ENCODE measurements at regions of chr19 and their contacts with region 1.

Region 1: DNA sequence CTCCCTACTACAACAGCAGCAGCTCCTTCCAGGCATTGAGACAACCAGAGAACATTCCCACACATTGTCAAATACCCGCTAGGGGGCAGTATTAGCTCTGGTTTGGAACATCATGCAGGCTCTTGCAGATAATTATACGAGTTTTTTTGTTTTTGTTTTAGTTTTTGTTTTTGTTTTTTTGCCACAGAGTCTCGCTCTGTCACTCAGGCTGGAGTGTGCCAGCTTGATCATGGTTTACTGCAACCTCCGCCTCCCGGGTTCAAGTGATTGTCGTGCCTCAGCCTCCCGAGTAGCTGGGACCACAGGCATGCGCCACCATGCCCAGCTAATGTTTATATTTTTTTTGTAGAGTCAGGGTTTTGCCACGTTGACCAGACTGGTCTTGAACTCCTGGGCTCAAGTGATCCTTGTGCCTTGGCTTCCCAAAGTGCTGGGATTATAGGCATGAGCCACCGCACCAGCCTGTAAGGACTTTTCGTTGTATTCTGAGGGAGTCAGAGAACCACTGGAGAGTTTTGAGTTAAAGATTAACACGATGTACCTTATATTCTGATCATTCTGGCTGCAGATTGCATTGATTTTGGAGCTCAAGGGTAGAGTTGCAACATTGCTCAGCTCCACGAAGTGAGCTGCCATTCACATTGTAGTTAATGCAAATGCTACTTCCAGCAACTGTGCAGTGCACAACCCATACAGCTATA is 41.7 kb upstream of the CEACAM20 start:
- DNase-seq: peak; percentile 76
- ATAC-seq: peak; percentile 96
- H3K4me3 ChIP-seq: no peak overlapping the region
- H3K27ac ChIP-seq: no peak overlapping the region
- H3K4me1 ChIP-seq: no peaks in the 10 kb centered on the region; a peak in 1 of 4 replicates
- H3K27me3 ChIP-seq: no peaks in the 10 kb centered on the region
- CTCF ChIP-seq: peak; percentile 77 to 82 (median 79)
- POLR2A ChIP-seq: no peak
- RAD21 ChIP-seq: peak; percentile 88

Region 2: GRCh38 chr19:44553478-44554171 is 17.5 kb before region 1 on chr19:
- CTCF ChIA-PET with region 1: interaction called, 10 read pairs
- POLR2A ChIA-PET with region 1: no interaction called
- RAD21 ChIA-PET with region 1: no interaction called
- intact Hi-C with region 1: no loop called
- DNase-seq: no peak
- ATAC-seq: no peak
- H3K4me3 ChIP-seq: no peak overlapping the region
- H3K27ac ChIP-seq: 0 out of 2 replicates have a peak overlapping the region, but pooled peaks have one; percentile 8
- H3K4me1 ChIP-seq: peaks cover 11 to 18% of the 10 kb centered on the region in 2 experiments
- H3K27me3 ChIP-seq: no peaks in the 10 kb centered on the region
- CTCF ChIP-seq: no peak
- POLR2A ChIP-seq: no peak
- RAD21 ChIP-seq: no peak

Region 3: GRCh38 chr19:44587963-44588770 is 17.0 kb after region 1 on chr19:
- CTCF ChIA-PET with region 1: interaction called, 20 read pairs
- POLR2A ChIA-PET with region 1: no interaction called
- RAD21 ChIA-PET with region 1: no interaction called
- intact Hi-C with region 1: no loop called
- DNase-seq: peak; percentile 78
- ATAC-seq: peak; percentile 89
- H3K4me3 ChIP-seq: peak overlapping the region; percentile 37 to 50
- H3K27ac ChIP-seq: peak overlapping the region; percentile 66
- H3K4me1 ChIP-seq: peaks cover 18 to 51% of the 10 kb centered on the region in 2 experiments
- H3K27me3 ChIP-seq: no peaks in the 10 kb centered on the region
- CTCF ChIP-seq: peak in 2 of 3 experiments; percentile 27 to 35; a peak in 1 of 6 replicates
- POLR2A ChIP-seq: no peak
- RAD21 ChIP-seq: peak; percentile 62

Region 4: DNA sequence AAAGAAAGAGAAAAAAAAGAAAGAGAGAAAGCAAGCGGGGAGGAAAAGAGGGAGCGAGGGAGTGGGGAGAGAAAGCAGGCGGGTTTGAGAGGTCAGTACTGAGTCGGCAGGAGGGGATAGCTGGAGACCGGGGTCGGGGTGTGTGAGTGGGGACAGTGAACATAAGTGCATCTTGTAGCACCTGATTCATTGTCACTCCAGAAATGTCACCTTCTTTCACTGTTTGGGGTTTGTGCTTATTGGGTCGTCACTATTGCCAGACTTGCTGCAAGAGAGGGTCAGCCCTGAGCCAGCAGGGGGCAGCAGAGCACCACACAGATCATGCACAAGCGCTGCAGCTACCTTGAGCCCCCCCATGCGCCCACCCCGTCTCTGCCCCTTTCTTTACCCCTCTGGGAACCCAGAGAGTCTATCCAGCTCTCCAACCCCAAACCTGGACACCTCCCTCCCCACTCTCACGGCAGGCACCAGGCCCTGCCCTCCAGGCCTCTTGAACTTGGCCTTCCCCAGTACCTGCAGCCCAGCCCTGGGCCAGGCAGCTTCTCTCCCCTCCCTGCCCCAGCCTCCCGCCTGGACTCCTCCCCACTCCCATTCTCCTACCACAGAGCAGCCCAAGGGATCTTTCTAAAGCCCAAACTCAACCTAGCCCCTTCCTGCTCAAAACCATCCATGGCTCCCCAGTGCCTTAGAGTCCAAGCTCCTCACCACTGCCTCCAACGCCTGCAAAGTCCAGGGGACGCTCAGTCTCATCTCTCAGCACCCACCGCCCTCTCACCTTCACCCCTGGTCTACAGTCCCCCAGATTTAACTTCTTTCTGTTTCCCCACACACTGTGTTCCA is 118.1 kb after region 1 on chr19:
- CTCF ChIA-PET with region 1: interaction called, 10 read pairs
- POLR2A ChIA-PET with region 1: no interaction called
- RAD21 ChIA-PET with region 1: no interaction called
- intact Hi-C with region 1: no loop called
- DNase-seq: peak; percentile 50
- ATAC-seq: peak; percentile 60
- H3K4me3 ChIP-seq: no peak overlapping the region
- H3K27ac ChIP-seq: peak overlapping the region; percentile 43; the same call in 1 of the 2 replicates
- H3K4me1 ChIP-seq: peaks cover 48 to 70% of the 10 kb centered on the region in 2 experiments
- H3K27me3 ChIP-seq: no peaks in the 10 kb centered on the region
- CTCF ChIP-seq: peak; percentile 68 to 97 (median 95)
- POLR2A ChIP-seq: no peak
- RAD21 ChIP-seq: peak; percentile 92

Region 5: GRCh38 chr19:44808463-44809371 is 237.6 kb after region 1 on chr19 and contains the start of gene BCAM:
- CTCF ChIA-PET with region 1: interaction called, 4 read pairs
- POLR2A ChIA-PET with region 1: no interaction called
- RAD21 ChIA-PET with region 1: no interaction called
- intact Hi-C with region 1: loop called (anchors 1 kb)
- DNase-seq: no peak
- ATAC-seq: peak; percentile 60
- H3K4me3 ChIP-seq: peak within 1 kb of the TSS; percentile 75 to 85
- H3K27ac ChIP-seq: peak within 1 kb of the TSS; percentile 89
- H3K4me1 ChIP-seq: peaks cover 34 to 45% of the 10 kb centered on the region in 2 experiments
- H3K27me3 ChIP-seq: no peaks in the 10 kb centered on the region
- CTCF ChIP-seq: no peak
- POLR2A ChIP-seq: peak; percentile 44
- RAD21 ChIP-seq: no peak
- total RNA-seq, gene BCAM: 78.7 TPM